Activated CD8-positive, alpha-beta T cell treated with anti-CD3 and anti-CD28 coated beads, Interleukin-2, amount 10 ng/mL, durations not matched to agents 7 days and 5 days (primary cell): ENCODE measurements at regions of chr10 and their contacts with region 1.

Region 1: GRCh38 chr10:104274762-104275721 is 6.1 kb downstream of the GSTO2 start:
- DNase-seq: peak; percentile 49
- ATAC-seq: peak; percentile 90
- H3K4me3 Mint-ChIP-seq: peak overlapping the region; percentile 45
- H3K27ac Mint-ChIP-seq: no peak overlapping the region
- H3K4me1 Mint-ChIP-seq: peaks cover 8% of the 10 kb centered on the region
- H3K27me3 Mint-ChIP-seq: peaks cover 20% of the 10 kb centered on the region

Region 2: DNA sequence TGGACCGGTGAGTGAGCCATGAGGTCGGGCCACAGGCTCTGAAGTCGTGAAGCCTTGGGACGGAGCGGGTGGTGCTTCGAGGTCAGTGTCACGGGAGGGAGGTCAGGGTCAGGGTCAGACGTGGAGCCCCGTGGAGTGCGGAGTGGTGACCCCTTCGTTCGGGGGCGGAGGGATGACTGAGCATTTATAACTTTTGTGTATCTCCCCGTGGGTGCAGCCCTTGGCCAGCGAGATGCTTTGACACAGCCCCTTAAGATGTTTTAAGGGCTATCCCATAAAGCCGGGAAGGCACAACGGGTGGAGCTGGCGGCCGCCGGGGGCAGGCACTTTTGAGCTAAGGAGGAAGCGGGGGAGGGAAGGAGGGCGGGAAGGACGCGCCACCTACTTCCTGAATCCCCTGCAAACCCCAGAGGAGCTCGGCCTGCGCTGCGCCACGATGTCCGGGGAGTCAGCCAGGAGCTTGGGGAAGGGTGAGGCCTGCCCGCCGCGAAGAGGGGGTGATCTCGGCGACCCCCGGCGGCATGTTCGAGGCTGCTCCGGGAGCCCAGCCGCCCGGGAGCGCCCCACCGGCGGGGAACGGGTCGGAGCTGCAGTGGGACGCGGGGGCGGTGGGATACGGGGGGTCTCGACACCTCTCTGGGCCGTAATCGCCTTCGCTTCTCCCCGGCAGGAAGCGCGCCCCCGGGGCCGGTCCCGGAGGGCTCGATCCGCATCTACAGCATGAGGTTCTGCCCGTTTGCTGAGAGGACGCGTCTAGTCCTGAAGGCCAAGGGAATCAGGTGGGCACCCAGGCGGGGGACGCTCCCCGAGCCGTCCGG is 20.3 kb before region 1 on chr10 and contains the start of gene GSTO1:
- CTCF ChIA-PET with region 1: interaction called, 94 read pairs
- POLR2A ChIA-PET with region 1: no interaction called
- DNase-seq: peak; percentile 62
- ATAC-seq: peak; percentile 81
- H3K4me3 Mint-ChIP-seq: peak within 1 kb of the TSS; percentile 93
- H3K27ac Mint-ChIP-seq: peak within 1 kb of the TSS; percentile 97
- H3K4me1 Mint-ChIP-seq: peaks cover 50% of the 10 kb centered on the region
- H3K27me3 Mint-ChIP-seq: peaks cover 4% of the 10 kb centered on the region
- total RNA-seq, gene GSTO1: 114 to 119 TPM

Region 3: GRCh38 chr10:104300736-104301292 is 25.8 kb after region 1 on chr10:
- CTCF ChIA-PET with region 1: interaction called, 85 read pairs
- POLR2A ChIA-PET with region 1: no interaction called
- DNase-seq: peak; percentile 53
- ATAC-seq: peak; percentile 40
- H3K4me3 Mint-ChIP-seq: no peak overlapping the region
- H3K27ac Mint-ChIP-seq: peak overlapping the region; percentile 84
- H3K4me1 Mint-ChIP-seq: peaks cover 43% of the 10 kb centered on the region
- H3K27me3 Mint-ChIP-seq: peaks cover 2% of the 10 kb centered on the region

Region 4: GRCh38 chr10:104337974-104338735 is 63.1 kb after region 1 on chr10 and contains the start of gene ITPRIP:
- CTCF ChIA-PET with region 1: interaction called, 31 read pairs
- POLR2A ChIA-PET with region 1: interaction called, 7 read pairs
- DNase-seq: peak; percentile 82
- ATAC-seq: peak; percentile 79
- H3K4me3 Mint-ChIP-seq: peak within 1 kb of the TSS; percentile 94
- H3K27ac Mint-ChIP-seq: peak within 1 kb of the TSS; percentile 100
- H3K4me1 Mint-ChIP-seq: peaks cover 49% of the 10 kb centered on the region
- H3K27me3 Mint-ChIP-seq: peaks cover 10% of the 10 kb centered on the region
- total RNA-seq, gene ITPRIP: 26.6 to 27.1 TPM

Region 5: GRCh38 chr10:104415526-104416165 is 140.6 kb after region 1 on chr10:
- CTCF ChIA-PET with region 1: no interaction called
- POLR2A ChIA-PET with region 1: no interaction called
- DNase-seq: no peak
- ATAC-seq: no peak
- H3K4me3 Mint-ChIP-seq: no peak overlapping the region
- H3K27ac Mint-ChIP-seq: no peak overlapping the region
- H3K4me1 Mint-ChIP-seq: no peaks in the 10 kb centered on the region
- H3K27me3 Mint-ChIP-seq: peaks cover 4% of the 10 kb centered on the region